WTC11 (cell line): ENCODE measurements at regions of chr4 and their contacts with region 1.

Region 1: DNA sequence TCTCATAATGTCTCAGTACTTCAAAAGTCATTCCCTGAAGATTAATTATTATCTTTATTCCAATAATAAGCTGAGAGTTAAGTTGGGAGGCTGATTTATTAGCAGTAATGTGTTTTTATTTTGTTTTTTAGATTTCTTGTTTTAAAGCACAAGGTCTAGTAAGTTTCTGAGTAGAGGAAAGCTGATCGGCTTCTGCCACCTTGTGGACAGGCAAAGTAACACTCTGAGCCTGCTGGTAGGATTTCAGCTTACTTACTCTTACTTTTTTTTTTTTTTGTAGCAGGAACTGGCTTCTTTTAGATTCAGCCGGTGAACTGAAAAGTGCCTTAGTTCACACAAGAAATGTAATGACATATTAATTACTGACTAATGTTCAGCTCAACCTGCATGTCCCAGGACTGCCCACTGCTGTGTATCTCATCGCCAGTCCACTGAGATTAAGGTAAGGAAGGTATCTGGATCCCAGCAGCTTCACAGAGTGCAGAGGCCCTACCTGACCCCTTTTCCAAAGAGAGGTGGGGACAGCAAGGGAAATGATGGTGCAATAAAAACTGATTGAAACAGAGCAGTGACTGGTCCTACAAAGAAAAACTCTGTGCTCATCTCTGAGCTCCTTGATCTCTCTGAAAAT is 126.5 kb downstream of the ADGRA3 start:
- DNase-seq: peak; percentile 57
- ATAC-seq: peak; percentile 74
- H3K4me3 Mint-ChIP-seq: no peak overlapping the region
- H3K27ac Mint-ChIP-seq: peak overlapping the region; percentile 78; the same call in 1 of the 2 replicates
- H3K4me1 Mint-ChIP-seq: peaks cover 5% of the 10 kb centered on the region; the same call in 1 of the 2 replicates
- H3K27me3 Mint-ChIP-seq: no peaks in the 10 kb centered on the region
- CTCF ChIP-seq: peak; percentile 61

Region 2: DNA sequence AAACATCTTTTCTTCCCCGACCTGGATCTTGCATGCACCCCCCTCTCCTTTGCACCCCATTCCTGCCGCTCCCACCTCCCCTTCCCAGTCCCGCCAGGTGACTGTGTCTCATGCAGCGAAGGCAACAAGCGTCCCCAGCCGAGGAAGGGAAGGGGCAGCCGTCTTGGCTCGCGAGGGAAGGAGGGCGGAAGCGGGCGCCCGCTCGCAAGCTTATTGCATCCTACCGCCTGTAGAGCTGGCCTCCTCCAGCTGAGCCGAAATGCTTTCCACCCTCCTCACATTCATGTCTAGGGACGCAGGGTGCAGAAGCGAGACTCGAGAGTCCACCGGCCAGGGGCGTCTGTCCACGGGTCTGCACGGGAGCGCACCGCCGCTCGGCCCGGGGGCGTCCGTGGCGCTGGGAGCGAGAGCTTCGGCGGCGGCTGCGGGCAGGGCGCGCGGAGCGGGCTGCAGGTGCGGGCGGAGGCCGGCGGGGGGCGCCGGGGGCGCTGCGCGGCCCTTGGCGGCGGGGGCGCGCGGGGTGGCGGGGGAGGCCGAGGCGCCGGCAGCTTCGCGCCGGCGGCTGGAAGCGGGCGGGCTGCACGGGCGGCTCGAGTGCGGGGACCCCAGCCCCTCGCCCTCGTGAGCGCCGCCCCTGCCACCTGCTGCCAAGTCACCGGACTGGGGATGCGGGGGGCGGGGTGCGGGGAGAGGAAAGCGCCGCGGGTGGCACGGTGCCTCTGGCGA is 440.8 kb before region 1 on chr4 and contains the start of gene KCNIP4:
- CTCF ChIA-PET with region 1: interaction called, 11 read pairs
- POLR2A ChIA-PET with region 1: no interaction called
- DNase-seq: peak; percentile 59
- ATAC-seq: peak; percentile 83
- H3K4me3 Mint-ChIP-seq: peak within 1 kb of the TSS; percentile 71
- H3K27ac Mint-ChIP-seq: no peak within 1 kb of the TSS
- H3K4me1 Mint-ChIP-seq: peaks cover 12% of the 10 kb centered on the region
- H3K27me3 Mint-ChIP-seq: peaks cover 44% of the 10 kb centered on the region
- CTCF ChIP-seq: no peak
- total RNA-seq, gene KCNIP4: not detected in 3 replicates

Region 3: GRCh38 chr4:22129454-22130029 is 259.8 kb before region 1 on chr4:
- CTCF ChIA-PET with region 1: interaction called, 12 read pairs
- POLR2A ChIA-PET with region 1: no interaction called
- DNase-seq: peak; percentile 66
- ATAC-seq: peak; percentile 99
- H3K4me3 Mint-ChIP-seq: no peak overlapping the region
- H3K27ac Mint-ChIP-seq: no peak overlapping the region
- H3K4me1 Mint-ChIP-seq: peaks cover 9% of the 10 kb centered on the region
- H3K27me3 Mint-ChIP-seq: 0 out of 2 replicates have a peak, but pooled peaks cover 5% of the 10 kb centered on the region
- CTCF ChIP-seq: peak; percentile 63